Activated B cell treated with CpG ODN at 0.5 μM for 24 hours (primary cell): ENCODE measurements at regions of chr3 and their contacts with region 1.

Region 1: DNA sequence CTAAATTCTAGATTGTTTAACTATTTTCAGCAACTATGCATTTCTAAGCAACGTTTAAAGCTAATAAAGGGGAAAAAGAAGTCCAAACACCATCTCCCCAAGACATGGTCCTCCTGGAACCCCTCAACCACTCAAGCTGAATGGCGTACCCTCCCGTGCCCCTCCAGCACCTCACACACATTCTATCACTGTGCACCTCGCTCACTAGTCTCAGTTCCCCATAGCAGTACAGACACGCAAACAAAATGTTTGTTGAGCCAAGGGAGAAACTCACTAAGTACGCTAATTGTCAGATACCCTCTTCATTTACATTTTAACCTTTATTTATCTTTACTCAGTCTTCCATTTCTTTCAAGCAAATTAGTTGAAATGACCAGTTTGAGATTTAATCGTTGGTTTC is 48.8 kb downstream of the ACAP2 start:
- DNase-seq: no peak
- ATAC-seq: peak; percentile 79
- H3K4me3 Mint-ChIP-seq: peak overlapping the region; percentile 30
- H3K27ac Mint-ChIP-seq: peak overlapping the region; percentile 35
- H3K4me1 Mint-ChIP-seq: peaks cover 51% of the 10 kb centered on the region
- H3K27me3 Mint-ChIP-seq: no peaks in the 10 kb centered on the region
- CTCF ChIP-seq: no peak

Region 2: DNA sequence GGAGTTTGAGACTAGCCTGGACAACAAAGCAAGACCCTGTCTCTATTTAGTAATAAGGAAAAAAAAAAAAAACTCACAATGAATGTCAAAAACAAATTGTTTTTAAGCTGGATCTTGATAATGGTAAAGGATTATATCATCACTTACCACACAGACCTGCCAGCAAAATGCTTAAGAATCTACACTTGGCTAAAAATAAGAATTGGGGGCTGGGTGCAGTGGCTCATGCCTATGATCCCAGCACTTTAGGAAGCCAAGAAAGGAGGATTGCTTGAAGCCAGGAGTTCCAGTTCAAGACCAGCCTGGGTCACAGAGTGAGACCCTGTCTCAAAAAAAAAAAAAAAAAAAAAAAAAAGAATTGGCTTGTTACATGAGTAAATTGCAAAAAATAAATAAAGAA is 17.8 kb after region 1 on chr3:
- CTCF ChIA-PET with region 1: no interaction called
- POLR2A ChIA-PET with region 1: interaction called, 3 read pairs
- intact Hi-C with region 1: loop called (anchors 2 kb)
- DNase-seq: no peak
- ATAC-seq: no peak
- H3K4me3 Mint-ChIP-seq: no peak overlapping the region
- H3K27ac Mint-ChIP-seq: no peak overlapping the region
- H3K4me1 Mint-ChIP-seq: peaks cover 59% of the 10 kb centered on the region
- H3K27me3 Mint-ChIP-seq: no peaks in the 10 kb centered on the region
- CTCF ChIP-seq: no peak

Region 3: GRCh38 chr3:195512798-195513345 is 118.8 kb after region 1 on chr3:
- CTCF ChIA-PET with region 1: no interaction called
- POLR2A ChIA-PET with region 1: no interaction called
- intact Hi-C with region 1: loop called (anchors 10 kb)
- DNase-seq: no peak
- ATAC-seq: no peak
- H3K4me3 Mint-ChIP-seq: no peak overlapping the region
- H3K27ac Mint-ChIP-seq: no peak overlapping the region
- H3K4me1 Mint-ChIP-seq: peaks cover 10% of the 10 kb centered on the region
- H3K27me3 Mint-ChIP-seq: no peaks in the 10 kb centered on the region
- CTCF ChIP-seq: no peak